ENCODE measurements at regions of chr1 and their contacts with region 1.

Region 1: DNA sequence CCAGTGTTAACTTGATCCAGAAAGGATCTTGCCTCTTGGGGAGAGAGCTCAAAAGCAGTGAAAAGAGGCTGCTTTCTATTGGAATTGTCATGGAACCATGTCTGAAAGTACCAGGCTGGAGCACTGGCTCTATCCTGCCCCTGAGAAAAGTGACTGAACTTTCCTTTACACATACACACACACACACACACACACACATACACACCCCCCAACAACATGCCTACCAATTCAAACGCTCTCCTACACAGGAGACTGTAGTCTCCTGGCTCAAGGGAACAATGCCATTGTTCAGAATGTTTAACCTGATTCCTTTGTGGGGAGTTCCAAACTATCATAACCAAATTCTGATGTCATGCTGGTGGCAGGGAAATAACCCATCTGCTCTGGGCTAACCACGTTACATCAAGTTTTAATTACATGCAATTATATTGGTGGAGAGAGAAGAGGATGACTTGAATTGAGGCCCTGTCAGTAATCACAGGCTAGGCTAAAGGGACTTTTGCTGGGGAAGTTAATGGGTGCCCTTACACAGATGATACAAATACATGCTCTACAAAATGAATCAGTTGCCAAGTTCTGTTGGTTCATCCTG is 52.3 kb upstream of the DUSP10 start:
- DNase-seq: peak; percentile 32
- H3K4me3 Mint-ChIP-seq: peak overlapping the region; percentile 35
- H3K27ac Mint-ChIP-seq: peak overlapping the region; percentile 91
- H3K4me1 Mint-ChIP-seq: peaks cover 41% of the 10 kb centered on the region
- H3K27me3 Mint-ChIP-seq: no peaks in the 10 kb centered on the region

Region 2: GRCh38 chr1:221725735-221726672 is 68.2 kb before region 1 on chr1:
- intact Hi-C with region 1: loop called (anchors 1 kb)
- DNase-seq: no peak
- H3K4me3 Mint-ChIP-seq: peak overlapping the region; percentile 55
- H3K27ac Mint-ChIP-seq: peak overlapping the region; percentile 92
- H3K4me1 Mint-ChIP-seq: peaks cover 87% of the 10 kb centered on the region
- H3K27me3 Mint-ChIP-seq: no peaks in the 10 kb centered on the region

Region 3: DNA sequence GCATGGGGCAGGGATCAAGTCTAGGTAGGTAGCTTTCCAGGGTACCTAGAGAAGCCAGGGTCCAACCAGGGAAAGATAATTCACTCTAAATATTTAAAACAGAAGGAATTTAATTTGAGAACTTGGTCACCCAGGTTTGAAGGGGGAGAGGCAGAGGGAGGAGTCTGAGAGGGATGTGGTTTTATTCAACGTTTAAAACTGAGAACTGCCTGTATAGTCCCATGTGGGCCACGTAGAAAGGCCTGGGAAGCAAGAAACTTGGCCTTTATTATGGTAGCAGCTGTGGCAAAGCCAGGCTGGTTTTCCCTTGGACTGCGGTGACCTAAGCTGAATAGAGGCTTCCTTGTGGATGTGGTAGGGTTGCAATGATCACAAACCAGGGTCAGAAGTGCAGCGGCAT is 10.2 kb before region 1 on chr1:
- intact Hi-C with region 1: loop called (anchors 1 kb)
- DNase-seq: no peak
- H3K4me3 Mint-ChIP-seq: peak overlapping the region; percentile 48
- H3K27ac Mint-ChIP-seq: peak overlapping the region; percentile 27
- H3K4me1 Mint-ChIP-seq: peaks cover 68% of the 10 kb centered on the region
- H3K27me3 Mint-ChIP-seq: no peaks in the 10 kb centered on the region

Region 4: DNA sequence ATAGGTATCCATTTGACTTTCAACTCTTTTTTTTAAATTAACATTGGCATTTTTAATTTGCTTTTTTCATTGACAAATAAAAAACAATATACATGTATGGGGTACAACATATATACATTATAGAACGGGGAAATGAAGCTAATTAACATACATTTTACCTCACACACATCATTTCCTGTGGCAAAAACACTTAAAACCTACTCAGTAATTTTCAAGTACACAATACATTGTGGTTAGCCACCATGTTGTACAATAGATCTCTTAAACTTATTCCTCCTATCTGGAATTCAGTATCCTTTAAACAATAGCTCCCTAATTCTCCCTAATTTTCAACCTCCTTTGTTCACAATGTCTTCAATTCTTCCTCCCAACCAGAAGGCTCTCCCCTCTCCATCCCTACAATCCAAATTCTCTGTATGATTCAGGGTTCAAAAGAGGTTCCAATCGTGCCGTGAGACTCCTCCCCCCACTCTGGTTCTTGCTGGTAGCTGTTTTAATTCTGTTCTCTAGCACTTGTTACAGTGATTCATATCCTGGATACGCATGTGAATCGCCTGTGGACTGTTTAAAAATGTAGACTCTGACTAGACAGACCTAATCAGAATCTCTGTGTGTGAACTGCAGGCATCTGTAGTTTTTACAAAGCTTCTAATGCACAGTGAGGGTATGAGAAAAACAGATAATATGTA is 35.3 kb after region 1 on chr1:
- intact Hi-C with region 1: loop called (anchors 1 kb)
- DNase-seq: peak; percentile 48
- H3K4me3 Mint-ChIP-seq: peak overlapping the region; percentile 73
- H3K27ac Mint-ChIP-seq: peak overlapping the region; percentile 97
- H3K4me1 Mint-ChIP-seq: peaks cover 91% of the 10 kb centered on the region
- H3K27me3 Mint-ChIP-seq: no peaks in the 10 kb centered on the region

Region 5: DNA sequence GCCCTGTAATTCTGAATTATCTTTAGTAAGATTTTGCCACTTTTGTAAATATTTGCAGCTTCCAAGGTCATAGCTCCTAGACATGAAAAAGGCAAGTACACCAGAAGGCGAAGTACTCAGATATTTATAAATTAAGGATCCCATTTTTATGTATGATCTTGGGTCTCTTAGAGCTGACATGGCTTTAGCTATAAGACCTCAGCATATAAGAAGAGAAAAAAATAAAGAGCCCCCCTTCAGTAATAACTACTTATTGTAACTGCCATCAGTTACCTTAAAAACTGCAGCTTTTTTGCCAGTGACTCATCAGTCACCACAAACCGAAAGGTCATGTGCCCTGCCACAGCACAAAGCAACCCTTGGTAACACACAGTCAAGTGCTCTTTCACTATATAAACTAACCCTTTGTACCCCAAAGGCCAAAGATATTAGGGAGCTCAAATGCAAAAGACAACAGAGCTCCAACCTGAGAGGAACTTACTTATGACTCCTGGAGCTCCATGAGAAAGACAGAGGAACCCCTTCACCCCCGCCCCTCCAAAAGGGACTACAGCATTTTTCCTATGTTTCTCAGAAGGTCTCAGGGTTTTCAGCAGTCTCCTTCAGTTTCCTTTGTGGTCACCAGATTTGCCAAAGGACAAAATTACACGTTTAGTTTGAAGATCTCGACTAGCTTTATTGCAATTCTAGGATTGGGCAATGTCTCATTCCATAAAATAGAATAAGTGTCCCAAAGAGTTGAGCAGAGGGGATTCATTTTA is 167.5 kb after region 1 on chr1:
- intact Hi-C with region 1: loop called (anchors 1 kb)
- DNase-seq: peak; percentile 38
- H3K4me3 Mint-ChIP-seq: peak overlapping the region; percentile 23
- H3K27ac Mint-ChIP-seq: no peak overlapping the region
- H3K4me1 Mint-ChIP-seq: peaks cover 16% of the 10 kb centered on the region
- H3K27me3 Mint-ChIP-seq: peaks cover 4% of the 10 kb centered on the region